HepG2 (cell line): ENCODE measurements at regions of chr1 and their contacts with region 1.

Region 1: GRCh38 chr1:60281360-60281932 is 207.9 kb upstream of the C1orf87 start:
- DNase-seq: peak; percentile 52
- ATAC-seq: peak; percentile 100
- H3K4me3 ChIP-seq: no peak overlapping the region
- H3K27ac ChIP-seq: no peak overlapping the region
- H3K4me1 ChIP-seq: peaks cover 10% of the 10 kb centered on the region; the same call in 1 of the 2 replicates
- H3K27me3 ChIP-seq: no peaks in the 10 kb centered on the region
- CTCF ChIP-seq: peak; percentile 89
- EP300 ChIP-seq: no peak
- POLR2A ChIP-seq: no peak
- RAD21 ChIP-seq: peak; percentile 67

Region 2: GRCh38 chr1:60510162-60510561 is 228.7 kb after region 1 on chr1:
- CTCF ChIA-PET with region 1: no interaction called
- POLR2A ChIA-PET with region 1: no interaction called
- in situ Hi-C with region 1: no loop called
- intact Hi-C with region 1: loop called (anchors 10 kb)
- DNase-seq: no peak
- ATAC-seq: no peak
- H3K4me3 ChIP-seq: no peak overlapping the region
- H3K27ac ChIP-seq: no peak overlapping the region
- H3K4me1 ChIP-seq: no peaks in the 10 kb centered on the region
- H3K27me3 ChIP-seq: no peaks in the 10 kb centered on the region
- CTCF ChIP-seq: no peak
- EP300 ChIP-seq: no peak
- POLR2A ChIP-seq: no peak
- RAD21 ChIP-seq: no peak

Region 3: DNA sequence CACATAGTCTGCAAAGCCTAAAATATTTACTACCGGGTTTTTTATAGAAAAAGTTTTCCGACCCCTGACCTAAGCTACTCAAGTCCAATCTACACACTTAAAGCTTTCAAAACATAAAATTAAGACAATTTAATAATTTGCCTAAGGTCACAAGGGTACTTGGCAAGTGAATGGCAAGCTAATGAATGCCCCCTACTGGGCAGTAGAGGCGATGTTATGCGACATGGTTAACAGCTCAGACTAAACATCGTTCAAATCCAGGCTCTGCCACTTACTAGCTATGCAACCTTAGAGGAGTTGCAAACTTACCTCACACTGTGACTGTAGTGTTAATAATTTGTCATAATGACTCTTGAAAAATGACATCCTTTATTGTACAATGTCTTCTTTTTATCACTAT is 483.8 kb after region 1 on chr1:
- CTCF ChIA-PET with region 1: interaction called, 6 read pairs
- POLR2A ChIA-PET with region 1: no interaction called
- in situ Hi-C with region 1: loop called (anchors 5 kb)
- intact Hi-C with region 1: loop called (anchors 1 kb)
- DNase-seq: peak; percentile 46
- ATAC-seq: peak; percentile 89
- H3K4me3 ChIP-seq: no peak overlapping the region
- H3K27ac ChIP-seq: no peak overlapping the region
- H3K4me1 ChIP-seq: no peaks in the 10 kb centered on the region
- H3K27me3 ChIP-seq: no peaks in the 10 kb centered on the region
- CTCF ChIP-seq: peak; percentile 79
- EP300 ChIP-seq: no peak
- POLR2A ChIP-seq: no peak
- RAD21 ChIP-seq: no peak

Region 4: DNA sequence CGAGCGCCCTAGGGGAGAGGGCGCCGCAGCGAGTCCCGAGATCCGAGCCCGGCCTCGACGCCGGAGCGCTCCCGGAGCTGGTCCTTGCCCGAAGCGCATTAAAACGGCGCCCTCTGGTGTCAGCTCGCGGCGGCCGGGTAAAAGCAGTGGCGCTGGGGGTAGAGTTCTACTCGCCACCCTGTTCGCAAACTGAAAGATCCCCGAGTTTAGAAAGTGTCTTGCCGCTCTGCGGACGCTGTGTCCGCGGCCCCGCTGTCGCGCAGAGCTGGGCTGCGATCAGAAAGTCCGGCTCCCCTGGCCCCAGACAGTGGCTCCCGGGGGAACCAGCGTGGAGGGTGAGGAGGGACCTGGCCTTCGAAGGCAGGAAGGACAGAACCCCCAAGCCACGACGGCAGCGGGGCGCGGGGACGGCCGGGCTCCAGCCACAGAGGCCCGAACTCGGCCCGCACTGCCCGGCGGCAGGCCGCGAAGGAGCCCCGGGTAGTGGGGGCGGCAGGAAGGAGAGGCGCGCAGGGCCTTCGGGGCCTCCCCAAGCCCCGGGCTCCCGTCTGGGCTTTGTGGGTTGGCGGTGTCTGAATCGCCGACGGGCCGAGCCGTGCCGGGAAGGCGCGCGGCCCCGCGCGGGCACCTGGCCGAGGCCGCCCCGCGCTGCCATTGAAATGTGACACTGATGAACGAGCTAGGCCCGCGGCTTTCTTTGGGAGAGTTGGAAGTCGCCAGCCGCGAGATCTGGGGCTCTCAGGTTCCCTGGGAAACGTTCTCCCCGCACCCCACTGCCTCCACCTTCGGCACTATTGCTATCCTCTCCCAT is 761.8 kb after region 1 on chr1:
- CTCF ChIA-PET with region 1: no interaction called
- POLR2A ChIA-PET with region 1: no interaction called
- in situ Hi-C with region 1: no loop called
- intact Hi-C with region 1: loop called (anchors 5 kb)
- DNase-seq: peak; percentile 37
- ATAC-seq: peak; percentile 99
- H3K4me3 ChIP-seq: peak overlapping the region; percentile 26 to 75 (median 52); a peak in 5 of 6 replicates
- H3K27ac ChIP-seq: no peak overlapping the region
- H3K4me1 ChIP-seq: peaks cover 6% of the 10 kb centered on the region; the same call in 1 of the 2 replicates
- H3K27me3 ChIP-seq: peaks cover 2 to 16% of the 10 kb centered on the region in 2 experiments; a peak in 4 of 5 replicates
- CTCF ChIP-seq: peak; percentile 94
- EP300 ChIP-seq: no peak
- POLR2A ChIP-seq: no peak
- RAD21 ChIP-seq: peak; percentile 88